A673 (cell line): ENCODE measurements at regions of chr13 and their contacts with region 1.

Region 1: DNA sequence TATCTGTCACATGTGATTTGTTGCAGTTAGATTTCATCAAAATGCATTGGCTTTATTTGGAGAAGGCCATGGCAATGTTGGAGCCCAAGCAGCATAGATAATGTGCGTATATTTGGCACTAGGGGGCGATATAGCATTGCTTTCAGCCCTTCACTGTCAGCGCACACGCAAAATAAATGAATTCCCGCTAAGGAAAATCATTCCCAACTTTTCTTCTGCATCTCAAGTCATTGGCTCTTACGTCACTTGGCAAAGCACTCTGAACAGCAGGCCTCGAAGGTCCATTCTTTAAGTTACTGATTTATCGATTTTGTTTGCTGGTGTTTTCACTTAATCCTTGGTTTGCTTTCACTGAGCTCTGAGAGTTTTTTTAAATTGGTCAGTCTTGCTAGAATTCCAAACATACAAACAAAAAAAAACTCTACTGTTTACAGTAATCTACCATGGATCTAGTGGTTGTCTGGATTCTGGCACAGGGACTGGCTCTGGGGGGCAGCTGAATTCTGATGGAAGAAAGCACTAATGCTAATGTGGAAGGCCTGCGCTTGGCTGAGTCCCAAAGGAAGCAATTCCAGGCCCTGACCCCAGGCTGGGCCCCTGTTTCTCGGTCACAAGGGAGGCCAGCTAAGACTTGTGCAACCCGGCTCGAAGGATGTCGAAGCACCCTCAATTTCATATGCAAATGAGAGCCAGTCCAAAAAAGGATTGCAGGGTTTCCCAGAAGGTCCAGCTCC is 97.7 kb upstream of the IPO5 start:
- DNase-seq: peak; percentile 94
- H3K4me3 ChIP-seq: no peak overlapping the region
- H3K27ac ChIP-seq: peak overlapping the region; percentile 88
- H3K4me1 ChIP-seq: peaks cover 34% of the 10 kb centered on the region
- H3K27me3 ChIP-seq: no peaks in the 10 kb centered on the region
- CTCF ChIP-seq: peak; percentile 88

Region 2: DNA sequence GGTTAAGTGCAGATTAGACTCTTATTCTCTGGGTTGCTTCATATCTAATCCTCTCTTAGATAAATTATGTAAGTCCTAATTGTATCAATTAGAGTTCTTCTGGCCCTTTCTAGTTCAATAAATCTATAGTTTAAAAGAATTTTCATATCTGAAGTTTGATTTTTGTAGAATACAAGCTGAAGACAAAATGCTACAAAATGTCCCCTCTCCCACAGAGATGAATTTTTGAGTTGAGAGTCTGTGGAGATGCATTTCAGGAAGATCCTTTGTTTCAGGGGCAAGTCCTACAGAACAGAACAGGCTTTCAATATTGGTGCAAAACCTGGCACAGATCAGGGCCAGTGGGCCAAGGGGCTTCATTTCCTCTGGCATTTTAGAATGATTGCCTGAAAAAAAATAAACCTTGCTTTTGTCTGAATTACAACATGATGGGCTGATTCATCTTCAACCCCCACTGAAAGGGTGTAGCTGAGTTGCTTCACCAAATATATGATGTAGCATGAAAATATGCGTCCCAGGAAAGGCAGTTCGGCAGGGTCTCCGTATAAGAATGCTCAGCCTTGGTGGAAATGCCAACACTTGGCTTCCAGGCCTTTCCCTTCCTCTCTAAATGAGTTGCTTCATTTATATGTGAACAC is 91.3 kb after region 1 on chr13:
- CTCF ChIA-PET with region 1: no interaction called
- POLR2A ChIA-PET with region 1: no interaction called
- intact Hi-C with region 1: loop called (anchors 1 kb)
- DNase-seq: peak; percentile 96
- H3K4me3 ChIP-seq: no peak overlapping the region
- H3K27ac ChIP-seq: peak overlapping the region; percentile 99
- H3K4me1 ChIP-seq: peaks cover 58% of the 10 kb centered on the region
- H3K27me3 ChIP-seq: no peaks in the 10 kb centered on the region
- CTCF ChIP-seq: no peak

Region 3: DNA sequence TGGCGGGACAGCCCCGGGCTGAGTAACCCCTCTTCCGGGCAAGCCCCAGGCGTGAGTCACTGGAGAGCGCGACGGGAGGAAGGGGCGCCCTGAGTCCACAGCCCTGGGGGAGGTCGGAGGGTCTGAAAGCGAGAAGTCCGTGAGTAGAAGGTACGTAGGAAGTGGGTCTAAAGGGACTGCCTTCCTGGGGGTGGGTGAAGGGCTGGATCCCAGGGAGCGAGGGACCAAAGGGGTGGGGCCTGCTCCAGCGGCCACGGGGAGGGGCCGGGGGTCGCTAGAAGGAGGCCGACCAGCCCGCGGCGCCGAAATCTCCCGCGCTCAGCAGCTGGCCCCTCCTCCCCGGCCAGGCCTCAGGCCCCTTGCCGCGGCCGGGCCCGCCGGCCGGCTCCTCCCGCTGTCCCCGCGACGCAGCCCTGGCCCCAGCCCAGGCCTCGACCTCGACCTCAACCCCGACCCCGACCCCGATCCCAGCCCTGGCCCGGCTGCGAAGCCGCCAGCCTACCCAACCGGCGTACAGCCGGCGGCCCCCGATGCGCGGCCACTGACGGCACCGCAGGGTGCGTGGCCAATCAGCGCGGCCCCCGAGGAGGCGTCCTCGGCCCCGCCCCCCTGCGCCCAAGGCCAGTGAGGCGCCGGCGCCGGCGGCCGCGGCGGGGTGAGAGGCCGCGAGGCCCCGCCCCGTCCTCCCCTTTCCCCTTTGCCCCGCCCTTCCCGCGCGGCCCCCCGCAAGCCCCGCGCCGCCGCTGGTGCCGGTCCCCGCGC is 120.3 kb after region 1 on chr13:
- CTCF ChIA-PET with region 1: no interaction called
- POLR2A ChIA-PET with region 1: interaction called, 5 read pairs
- intact Hi-C with region 1: loop called (anchors 2 kb)
- DNase-seq: peak; percentile 96
- H3K4me3 ChIP-seq: peak overlapping the region; percentile 69
- H3K27ac ChIP-seq: peak overlapping the region; percentile 94
- H3K4me1 ChIP-seq: peaks cover 18% of the 10 kb centered on the region
- H3K27me3 ChIP-seq: no peaks in the 10 kb centered on the region
- CTCF ChIP-seq: no peak

Region 4: DNA sequence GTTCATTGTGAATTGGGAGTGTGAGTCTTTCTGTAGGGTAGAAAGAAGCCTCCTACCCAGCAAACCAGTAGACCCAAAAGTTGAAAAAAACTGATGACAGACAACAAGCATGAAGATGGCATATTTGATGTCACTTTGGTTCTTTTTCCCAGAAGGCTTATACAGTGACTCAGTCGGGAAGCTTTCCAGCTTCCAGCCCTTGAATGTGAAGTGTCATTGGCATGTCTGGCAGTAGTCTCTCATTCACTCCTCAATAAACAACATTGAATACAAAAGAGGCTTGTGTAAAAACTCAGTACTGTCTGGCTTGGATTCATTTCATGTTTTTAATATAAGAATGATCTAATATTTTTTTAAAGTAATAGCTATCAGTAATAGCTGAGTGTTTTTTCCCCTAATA is 166.5 kb after region 1 on chr13:
- CTCF ChIA-PET with region 1: no interaction called
- POLR2A ChIA-PET with region 1: no interaction called
- intact Hi-C with region 1: loop called (anchors 5 kb)
- DNase-seq: peak; percentile 80
- H3K4me3 ChIP-seq: no peak overlapping the region
- H3K27ac ChIP-seq: peak overlapping the region; percentile 60
- H3K4me1 ChIP-seq: peaks cover 41% of the 10 kb centered on the region
- H3K27me3 ChIP-seq: no peaks in the 10 kb centered on the region
- CTCF ChIP-seq: no peak

Region 5: DNA sequence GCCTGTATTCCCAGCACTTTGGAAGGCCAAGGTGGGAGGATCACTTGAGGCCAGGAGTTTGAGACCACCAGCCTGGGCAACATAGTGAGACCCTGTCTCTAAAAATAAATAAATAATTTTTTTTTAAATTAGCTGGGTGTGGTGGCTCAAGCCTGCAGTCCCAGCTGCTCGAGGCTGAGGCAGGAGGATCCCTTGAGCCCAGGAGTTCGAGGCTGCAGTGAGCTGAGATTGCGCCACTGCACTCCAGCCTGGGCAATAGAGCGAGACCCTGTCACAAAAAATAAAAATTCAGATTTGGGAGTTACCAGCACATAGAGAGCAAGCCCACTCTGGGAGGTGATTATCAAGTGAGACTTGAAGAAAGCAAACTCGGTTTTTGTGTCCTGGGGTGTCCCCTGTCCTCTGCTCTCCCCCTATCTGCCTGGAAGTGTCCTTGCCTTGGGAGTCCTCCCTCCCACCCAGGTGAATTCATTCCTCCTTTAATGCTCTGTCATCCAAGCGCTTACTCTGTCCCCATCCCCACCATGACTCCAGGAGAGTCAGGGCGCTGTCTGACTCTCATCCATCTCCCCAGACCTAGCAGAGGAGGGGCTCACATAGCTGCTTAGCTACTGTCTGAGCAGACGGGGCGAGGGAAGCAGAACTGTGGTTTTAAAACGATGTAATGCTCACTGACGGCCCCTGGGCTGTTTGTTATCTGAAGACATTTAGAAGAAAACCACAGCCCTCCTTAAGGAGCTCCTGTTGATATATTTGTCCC is 574.4 kb after region 1 on chr13:
- CTCF ChIA-PET with region 1: no interaction called
- POLR2A ChIA-PET with region 1: no interaction called
- intact Hi-C with region 1: loop called (anchors 10 kb)
- DNase-seq: no peak
- H3K4me3 ChIP-seq: no peak overlapping the region
- H3K27ac ChIP-seq: no peak overlapping the region
- H3K4me1 ChIP-seq: no peaks in the 10 kb centered on the region
- H3K27me3 ChIP-seq: no peaks in the 10 kb centered on the region
- CTCF ChIP-seq: no peak